ENCODE measurements at regions of chr12 and their contacts with region 1.

Region 1: GRCh38 chr12:9647825-9648700 is 21.4 kb upstream of the CLEC2D start:
- DNase-seq: peak; percentile 75 to 97 (median 88)
- ATAC-seq: peak; percentile 74
- H3K4me3 ChIP-seq: peak overlapping the region; percentile 90
- H3K4me3 Mint-ChIP-seq: peak overlapping the region; percentile 94
- H3K27ac ChIP-seq: peak overlapping the region; percentile 83 to 90
- H3K27ac Mint-ChIP-seq: peak overlapping the region; percentile 89
- H3K4me1 ChIP-seq: peaks cover 23% of the 10 kb centered on the region
- H3K4me1 Mint-ChIP-seq: peaks cover 62% of the 10 kb centered on the region
- H3K27me3 ChIP-seq: no peaks in the 10 kb centered on the region
- H3K27me3 Mint-ChIP-seq: no peaks in the 10 kb centered on the region
- CTCF ChIP-seq: no peak

Region 2: DNA sequence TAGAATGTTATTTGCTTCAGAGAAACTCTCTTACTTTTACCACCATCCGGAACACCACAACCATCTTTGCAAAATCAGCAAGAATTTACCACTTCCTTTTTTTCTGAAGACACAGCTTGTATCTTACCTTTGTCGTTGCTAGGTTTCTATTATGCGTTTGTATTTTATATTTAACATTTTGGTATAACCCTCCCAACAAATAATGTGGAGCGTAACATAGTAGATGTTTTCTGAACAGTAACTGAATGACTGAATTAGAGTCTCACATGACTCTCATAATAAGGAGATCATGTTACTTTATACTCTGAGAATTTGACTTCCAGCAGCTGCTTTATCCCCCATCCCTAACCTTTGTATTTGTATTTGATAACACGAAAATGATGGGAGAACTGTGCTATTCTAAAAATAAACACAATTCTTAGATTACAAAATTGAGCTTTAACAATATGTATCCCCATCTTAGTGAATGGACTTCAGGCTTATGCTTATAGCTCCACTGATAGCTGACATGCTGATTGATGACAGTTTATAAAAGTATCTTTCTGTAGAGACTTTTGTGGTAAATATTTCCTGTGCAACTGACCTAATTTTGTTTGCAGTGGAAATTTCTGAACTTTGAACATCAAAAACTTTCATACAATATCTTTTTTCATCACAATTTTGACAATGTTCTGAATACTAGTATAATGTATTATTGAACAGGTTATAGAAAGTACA is 32.5 kb before region 1 on chr12:
- CTCF ChIA-PET with region 1: no interaction called
- POLR2A ChIA-PET with region 1: interaction called, 45 read pairs
- intact Hi-C with region 1: no loop called
- DNase-seq: peak in 3 of 14 experiments; percentile 69 to 86 (median 72)
- ATAC-seq: peak; percentile 94
- H3K4me3 ChIP-seq: peak overlapping the region; percentile 39
- H3K4me3 Mint-ChIP-seq: peak overlapping the region; percentile 69
- H3K27ac ChIP-seq: peak overlapping the region; percentile 43 to 89
- H3K27ac Mint-ChIP-seq: peak overlapping the region; percentile 97
- H3K4me1 ChIP-seq: peaks cover 24% of the 10 kb centered on the region
- H3K4me1 Mint-ChIP-seq: peaks cover 90% of the 10 kb centered on the region
- H3K27me3 ChIP-seq: no peaks in the 10 kb centered on the region
- H3K27me3 Mint-ChIP-seq: no peaks in the 10 kb centered on the region
- CTCF ChIP-seq: no peak

Region 3: DNA sequence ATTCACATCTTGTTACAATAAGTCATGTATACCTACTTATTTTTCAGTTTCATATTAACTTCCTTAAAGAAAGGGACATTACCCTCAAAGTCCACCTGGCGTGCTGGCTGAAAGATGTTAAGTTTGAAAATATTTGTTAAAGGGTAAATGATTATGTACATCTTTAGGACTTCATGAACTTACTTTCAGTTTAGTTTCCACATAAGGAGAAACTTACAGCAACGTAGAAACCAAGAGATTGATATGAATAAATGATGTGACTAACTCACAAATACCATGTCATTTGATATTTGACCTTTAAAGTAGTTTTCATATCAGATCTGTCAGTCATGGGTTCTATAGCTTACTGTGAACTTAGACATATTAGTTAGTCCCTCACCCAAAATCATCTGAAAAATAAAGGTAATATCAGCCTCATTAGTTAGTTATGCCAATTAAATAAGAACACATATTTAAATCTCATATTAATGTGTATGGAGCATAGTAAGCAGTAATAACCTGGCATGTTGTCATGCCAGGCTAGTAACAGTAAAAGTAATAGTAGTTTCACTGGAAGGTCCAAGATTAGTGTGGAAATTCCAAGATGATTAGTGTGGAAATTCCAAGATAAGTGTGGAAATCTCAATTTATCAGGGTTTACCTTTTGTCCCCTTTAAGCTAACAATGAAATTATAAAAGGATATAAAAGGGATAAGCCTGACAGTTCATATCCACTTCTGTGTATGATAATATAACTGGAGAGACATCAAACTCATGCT is 19.5 kb after region 1 on chr12:
- CTCF ChIA-PET with region 1: interaction called, 18 read pairs
- POLR2A ChIA-PET with region 1: interaction called, 648 read pairs
- intact Hi-C with region 1: loop called (anchors 1 kb)
- DNase-seq: no peak
- ATAC-seq: no peak
- H3K4me3 ChIP-seq: peak overlapping the region; percentile 72
- H3K4me3 Mint-ChIP-seq: peak overlapping the region; percentile 70
- H3K27ac ChIP-seq: peak overlapping the region; percentile 77 to 88
- H3K27ac Mint-ChIP-seq: peak overlapping the region; percentile 90
- H3K4me1 ChIP-seq: peaks cover 44% of the 10 kb centered on the region
- H3K4me1 Mint-ChIP-seq: peaks cover 73% of the 10 kb centered on the region
- H3K27me3 ChIP-seq: no peaks in the 10 kb centered on the region
- H3K27me3 Mint-ChIP-seq: no peaks in the 10 kb centered on the region
- CTCF ChIP-seq: no peak

Region 4: GRCh38 chr12:9702255-9702654 is 54.2 kb after region 1 on chr12:
- CTCF ChIA-PET with region 1: interaction called, 15 read pairs
- POLR2A ChIA-PET with region 1: interaction called, 97 read pairs
- intact Hi-C with region 1: loop called in 1 of 2 experiments (anchors 2 kb)
- DNase-seq: peak in 12 of 14 experiments; percentile 28 to 89 (median 50)
- ATAC-seq: peak; percentile 71
- H3K4me3 ChIP-seq: peak overlapping the region; percentile 27
- H3K4me3 Mint-ChIP-seq: peak overlapping the region; percentile 69
- H3K27ac ChIP-seq: peak overlapping the region; percentile 55 to 77
- H3K27ac Mint-ChIP-seq: peak overlapping the region; percentile 90
- H3K4me1 ChIP-seq: peaks cover 24% of the 10 kb centered on the region
- H3K4me1 Mint-ChIP-seq: peaks cover 93% of the 10 kb centered on the region
- H3K27me3 ChIP-seq: no peaks in the 10 kb centered on the region
- H3K27me3 Mint-ChIP-seq: no peaks in the 10 kb centered on the region
- CTCF ChIP-seq: no peak

Region 5: GRCh38 chr12:9750276-9751203 is 102.5 kb after region 1 on chr12:
- CTCF ChIA-PET with region 1: interaction called, 5 read pairs
- POLR2A ChIA-PET with region 1: interaction called, 123 read pairs
- intact Hi-C with region 1: loop called in 1 of 2 experiments (anchors 5 kb)
- DNase-seq: peak in 13 of 14 experiments; percentile 13 to 87 (median 44)
- ATAC-seq: peak; percentile 48
- H3K4me3 ChIP-seq: peak overlapping the region; percentile 10
- H3K4me3 Mint-ChIP-seq: peak overlapping the region; percentile 63
- H3K27ac ChIP-seq: no peak overlapping the region
- H3K27ac Mint-ChIP-seq: peak overlapping the region; percentile 80
- H3K4me1 ChIP-seq: peaks cover 14% of the 10 kb centered on the region
- H3K4me1 Mint-ChIP-seq: peaks cover 54% of the 10 kb centered on the region
- H3K27me3 ChIP-seq: no peaks in the 10 kb centered on the region
- H3K27me3 Mint-ChIP-seq: no peaks in the 10 kb centered on the region
- CTCF ChIP-seq: peak; percentile 86

Region 6: GRCh38 chr12:9925708-9926393 is 277.8 kb after region 1 on chr12:
- CTCF ChIA-PET with region 1: no interaction called
- POLR2A ChIA-PET with region 1: no interaction called
- intact Hi-C with region 1: loop called in 1 of 2 experiments (anchors 10 kb)
- DNase-seq: peak in 5 of 14 experiments; percentile 9 to 70 (median 57)
- ATAC-seq: peak; percentile 48
- H3K4me3 ChIP-seq: peak overlapping the region; percentile 21
- H3K4me3 Mint-ChIP-seq: peak overlapping the region; percentile 51
- H3K27ac ChIP-seq: no peak overlapping the region
- H3K27ac Mint-ChIP-seq: no peak overlapping the region
- H3K4me1 ChIP-seq: no peaks in the 10 kb centered on the region
- H3K4me1 Mint-ChIP-seq: peaks cover 9% of the 10 kb centered on the region
- H3K27me3 ChIP-seq: no peaks in the 10 kb centered on the region
- H3K27me3 Mint-ChIP-seq: no peaks in the 10 kb centered on the region
- CTCF ChIP-seq: peak; percentile 75